ENCODE measurements at regions of chr12 and their contacts with region 1.

Region 1: DNA sequence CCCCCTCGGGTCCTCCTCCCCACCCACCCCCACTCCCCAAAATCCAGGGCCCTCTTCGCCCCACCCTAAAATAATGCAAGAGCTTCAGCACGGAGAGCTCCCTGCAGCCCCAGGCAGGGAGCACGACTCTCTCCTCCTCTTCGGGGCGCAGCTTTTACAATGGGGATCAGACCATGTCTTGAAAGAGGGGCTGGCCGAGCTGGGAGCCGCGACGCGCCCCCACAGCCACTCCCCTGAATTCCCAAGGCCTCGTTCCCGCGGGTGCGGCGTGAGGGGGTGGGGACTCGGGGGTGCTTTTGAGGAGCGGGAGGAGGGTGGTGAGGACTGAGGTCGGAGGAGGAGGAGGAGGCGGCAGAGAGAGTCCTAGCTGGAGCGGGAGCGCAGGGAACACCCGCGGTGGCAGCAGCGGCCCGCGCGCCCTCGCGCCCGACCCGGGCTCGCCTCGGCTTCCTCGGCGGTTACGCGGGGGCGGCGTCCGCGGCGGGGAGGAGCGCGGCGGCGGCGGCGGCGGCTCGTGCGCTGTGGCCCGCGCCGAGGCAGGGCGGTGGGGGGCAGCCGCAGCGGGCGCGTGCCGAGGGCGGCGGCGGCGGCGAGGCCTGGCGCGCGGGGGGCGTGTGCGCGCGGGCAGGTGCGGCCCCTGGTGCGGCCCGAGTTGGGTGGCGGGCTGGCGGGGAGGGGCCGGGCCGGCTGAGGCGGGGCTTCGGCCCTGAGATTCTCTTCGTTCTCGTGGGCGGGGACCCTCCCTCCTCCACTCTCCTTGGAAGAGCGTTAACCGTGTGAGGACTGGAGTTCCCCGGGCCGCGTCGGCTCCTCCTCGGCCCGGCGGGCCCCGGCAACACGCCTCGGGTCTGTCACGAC is at the start of gene ANKS1B:
- DNase-seq: peak in 1 of 2 donors; percentile 82
- H3K4me3 ChIP-seq: peak within 1 kb of the TSS; percentile 74 to 96
- H3K27ac ChIP-seq: peak within 1 kb of the TSS; percentile 79 to 90
- H3K4me1 ChIP-seq: no peaks in the 10 kb centered on the region
- H3K27me3 ChIP-seq: no peaks in the 10 kb centered on the region
- CTCF ChIP-seq: no peak
- total RNA-seq, gene ANKS1B: 8.2 TPM

Region 2: DNA sequence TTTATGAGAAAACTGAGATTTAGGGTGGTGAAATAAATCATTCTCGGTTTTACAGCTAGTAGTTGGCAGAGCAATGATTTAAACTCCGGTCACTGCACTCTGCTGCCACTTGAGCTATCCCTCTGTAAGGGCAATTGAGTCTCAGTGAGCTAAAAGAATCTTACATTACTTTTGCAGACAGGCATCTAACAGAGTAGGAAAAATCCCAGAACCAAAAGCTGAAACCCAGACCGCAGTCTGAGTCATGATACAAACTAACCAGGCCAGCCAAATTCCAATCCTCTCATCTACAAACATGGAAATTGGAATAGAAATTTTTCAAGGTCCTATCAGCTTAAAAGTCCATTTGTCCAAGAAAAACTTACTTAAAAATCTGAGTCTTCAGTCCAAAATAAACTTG is 73.4 kb before region 1 on chr12:
- intact Hi-C with region 1: loop called (anchors 2 kb)
- DNase-seq: peak; percentile 10 to 82
- H3K4me3 ChIP-seq: peak overlapping the region; percentile 28 to 48
- H3K27ac ChIP-seq: peak overlapping the region; percentile 68 to 72
- H3K4me1 ChIP-seq: peaks cover 3 to 20% of the 10 kb centered on the region in 2 donors
- H3K27me3 ChIP-seq: no peaks in the 10 kb centered on the region
- CTCF ChIP-seq: peak in 1 of 3 experiments; percentile 6

Region 3: DNA sequence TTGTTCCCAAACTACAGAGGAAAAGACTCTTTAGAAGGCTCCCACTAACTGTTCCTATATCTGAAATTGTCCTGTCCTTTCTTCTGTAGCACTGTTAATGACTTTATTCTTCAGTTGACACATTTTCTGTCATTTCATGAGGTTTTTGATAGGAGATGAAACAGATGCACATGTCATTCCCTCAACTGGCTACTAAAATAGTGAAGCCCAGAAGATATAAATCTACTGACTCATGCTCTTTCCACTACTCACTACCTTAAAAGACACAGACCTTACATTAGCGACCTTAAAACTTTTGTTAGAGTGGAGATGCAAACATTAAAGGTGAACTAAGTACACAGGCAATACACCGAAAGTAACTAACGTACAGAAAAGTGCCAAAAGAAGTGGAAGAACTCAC is 59.8 kb after region 1 on chr12:
- intact Hi-C with region 1: no loop called
- DNase-seq: no peak
- H3K4me3 ChIP-seq: no peak overlapping the region
- H3K27ac ChIP-seq: no peak overlapping the region
- H3K4me1 ChIP-seq: no peaks in the 10 kb centered on the region
- H3K27me3 ChIP-seq: no peaks in the 10 kb centered on the region
- CTCF ChIP-seq: no peak

Measured in ascending aorta (tissue), 2 donors.